T-cell (primary cell): ENCODE measurements at regions of chr7 and their contacts with region 1.

Region 1: DNA sequence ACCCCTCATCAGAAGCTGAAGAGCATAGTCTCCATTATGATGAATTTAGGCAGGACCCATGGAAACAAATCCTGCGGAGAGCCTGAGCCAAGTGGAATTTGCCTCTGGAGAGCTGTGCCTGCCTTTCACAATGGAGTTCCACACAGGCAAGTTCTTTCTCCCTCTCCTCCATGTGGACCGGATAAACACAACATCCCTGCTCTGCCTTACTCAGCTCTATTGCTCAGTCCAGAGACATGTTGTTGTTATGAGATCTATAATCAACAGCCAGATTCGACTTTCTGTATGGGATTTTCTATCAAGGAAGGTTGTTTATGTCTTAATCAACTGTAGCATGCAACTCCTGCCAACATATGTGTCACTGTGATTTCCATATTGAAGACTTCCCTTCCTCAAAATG is 59.5 kb upstream of the ELMO1 start:
- DNase-seq: no peak
- ATAC-seq: no peak
- H3K4me3 ChIP-seq: no peak overlapping the region
- H3K4me3 Mint-ChIP-seq: no peak overlapping the region
- H3K27ac ChIP-seq: no peak overlapping the region
- H3K27ac Mint-ChIP-seq: no peak overlapping the region
- H3K4me1 ChIP-seq: no peaks in the 10 kb centered on the region
- H3K4me1 Mint-ChIP-seq: no peaks in the 10 kb centered on the region
- H3K27me3 ChIP-seq: peaks cover 0 to 3% of the 10 kb centered on the region in 2 experiments
- H3K27me3 Mint-ChIP-seq: peaks cover 5 to 16% of the 10 kb centered on the region in 2 donors

Region 2: DNA sequence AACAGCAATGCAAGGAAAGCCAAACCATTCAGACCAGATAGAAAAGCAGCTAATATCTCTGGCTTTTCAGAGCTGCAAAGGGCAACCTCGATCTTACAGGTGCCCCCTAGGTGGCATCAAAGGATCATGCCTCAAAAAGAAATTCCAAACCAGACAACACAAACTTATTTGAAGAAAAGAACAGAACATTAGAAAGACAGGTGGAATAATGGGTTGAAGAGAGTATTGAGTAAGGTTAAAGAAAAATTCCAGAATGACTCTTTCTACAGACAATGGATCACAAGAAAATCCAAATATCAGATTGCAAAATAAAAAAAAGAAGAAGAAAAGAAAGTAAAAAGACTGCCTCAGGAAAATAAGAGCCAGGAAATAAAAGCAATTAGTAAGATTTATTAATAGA is 273.2 kb before region 1 on chr7:
- CTCF ChIA-PET with region 1: interaction called, 5 to 11 read pairs
- POLR2A ChIA-PET with region 1: no interaction called
- DNase-seq: peak in 16 of 35 experiments; percentile 3 to 55 (median 14)
- ATAC-seq: peak in 1 of 4 experiments; percentile 51
- H3K4me3 ChIP-seq: no peak overlapping the region
- H3K4me3 Mint-ChIP-seq: no peak overlapping the region
- H3K27ac ChIP-seq: no peak overlapping the region
- H3K27ac Mint-ChIP-seq: no peak overlapping the region
- H3K4me1 ChIP-seq: peaks cover 0 to 3% of the 10 kb centered on the region in 2 experiments
- H3K4me1 Mint-ChIP-seq: peaks cover 6 to 21% (median 17%) of the 10 kb centered on the region in 3 donors
- H3K27me3 ChIP-seq: no peaks in the 10 kb centered on the region
- H3K27me3 Mint-ChIP-seq: no peaks in the 10 kb centered on the region

Region 3: DNA sequence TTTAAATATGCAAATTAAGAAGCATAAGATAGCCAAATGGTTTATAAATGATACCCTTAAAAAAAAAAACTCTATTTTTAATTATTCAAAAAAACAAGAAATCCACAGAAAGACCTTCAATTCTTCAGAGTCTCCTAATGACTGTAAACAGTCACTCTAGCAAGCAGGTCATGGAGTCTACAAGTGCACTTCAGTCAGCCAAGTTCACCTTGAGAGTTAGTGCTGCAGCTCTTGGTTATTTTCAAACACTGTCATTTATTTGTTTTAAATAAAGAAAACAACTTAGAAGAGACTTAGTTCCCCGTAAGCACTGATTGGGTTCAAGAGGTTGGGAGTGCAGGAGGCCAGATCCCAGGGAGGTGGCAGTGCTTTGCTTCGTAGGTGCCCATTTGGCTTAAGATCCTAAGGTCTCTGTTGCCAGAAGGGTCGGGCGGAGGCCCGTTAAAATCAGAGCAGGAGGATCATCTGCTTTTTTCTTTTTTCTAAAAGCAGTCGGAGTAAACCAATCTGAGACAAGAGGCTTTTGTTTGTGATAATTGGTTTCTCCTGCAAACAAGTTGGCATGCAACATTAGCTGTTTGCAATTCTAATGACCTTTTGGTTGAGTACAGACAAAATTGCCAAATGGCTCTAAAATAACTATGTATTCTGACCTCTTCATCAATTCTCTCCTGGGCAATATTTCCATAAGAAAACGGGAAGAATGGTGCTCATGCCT is 26.9 kb after region 1 on chr7:
- CTCF ChIA-PET with region 1: no interaction called
- POLR2A ChIA-PET with region 1: no interaction called
- DNase-seq: no peak
- ATAC-seq: no peak
- H3K4me3 ChIP-seq: no peak overlapping the region
- H3K4me3 Mint-ChIP-seq: no peak overlapping the region
- H3K27ac ChIP-seq: no peak overlapping the region
- H3K27ac Mint-ChIP-seq: no peak overlapping the region
- H3K4me1 ChIP-seq: no peaks in the 10 kb centered on the region
- H3K4me1 Mint-ChIP-seq: no peaks in the 10 kb centered on the region
- H3K27me3 ChIP-seq: peaks cover 0 to 2% of the 10 kb centered on the region in 2 experiments
- H3K27me3 Mint-ChIP-seq: peaks cover 0 to 12% of the 10 kb centered on the region in 2 donors